Mucosa of descending colon (tissue), 3 donors: ENCODE measurements at regions of chr5 and their contacts with region 1.

Region 1: GRCh38 chr5:152379331-152379730 is 25.7 kb downstream of the NMUR2 start:
- DNase-seq: no peak
- ATAC-seq: no peak
- H3K4me3 ChIP-seq: no peak overlapping the region
- H3K4me1 ChIP-seq: no peaks in the 10 kb centered on the region
- CTCF ChIP-seq: no peak

Region 2: DNA sequence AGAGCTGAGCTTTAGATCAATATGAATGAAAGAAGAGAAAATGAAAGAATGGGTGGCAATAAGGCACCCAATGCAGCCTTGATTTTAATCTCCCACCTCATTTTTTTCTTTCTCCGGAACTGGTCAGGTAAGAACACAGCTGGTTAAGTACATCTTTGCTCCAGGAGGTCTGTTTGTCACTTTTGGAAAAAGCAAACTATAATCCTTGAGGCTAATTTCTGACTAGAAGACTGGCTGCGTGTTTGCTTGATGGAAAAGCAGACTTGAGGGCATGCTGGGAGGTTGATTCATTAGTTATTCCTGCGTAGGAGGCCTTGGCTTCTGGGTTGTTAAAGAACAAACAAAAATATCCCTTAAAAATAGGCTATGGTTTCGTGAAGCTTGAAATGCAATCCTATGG is 149.2 kb before region 1 on chr5:
- intact Hi-C with region 1: no loop called
- DNase-seq: no peak
- ATAC-seq: no peak
- H3K4me3 ChIP-seq: no peak overlapping the region
- H3K4me1 ChIP-seq: no peaks in the 10 kb centered on the region
- CTCF ChIP-seq: no peak

Region 3: GRCh38 chr5:152505442-152506042 is 126.2 kb after region 1 on chr5:
- intact Hi-C with region 1: loop called in 1 of 2 experiments (anchors 2 kb)
- DNase-seq: peak in 2 of 3 donors; percentile 26 to 67
- ATAC-seq: peak; percentile 84
- H3K4me3 ChIP-seq: no peak overlapping the region
- H3K4me1 ChIP-seq: no peaks in the 10 kb centered on the region
- CTCF ChIP-seq: peak; percentile 15